ENCODE measurements at regions of chr10 and their contacts with region 1.

Region 1: DNA sequence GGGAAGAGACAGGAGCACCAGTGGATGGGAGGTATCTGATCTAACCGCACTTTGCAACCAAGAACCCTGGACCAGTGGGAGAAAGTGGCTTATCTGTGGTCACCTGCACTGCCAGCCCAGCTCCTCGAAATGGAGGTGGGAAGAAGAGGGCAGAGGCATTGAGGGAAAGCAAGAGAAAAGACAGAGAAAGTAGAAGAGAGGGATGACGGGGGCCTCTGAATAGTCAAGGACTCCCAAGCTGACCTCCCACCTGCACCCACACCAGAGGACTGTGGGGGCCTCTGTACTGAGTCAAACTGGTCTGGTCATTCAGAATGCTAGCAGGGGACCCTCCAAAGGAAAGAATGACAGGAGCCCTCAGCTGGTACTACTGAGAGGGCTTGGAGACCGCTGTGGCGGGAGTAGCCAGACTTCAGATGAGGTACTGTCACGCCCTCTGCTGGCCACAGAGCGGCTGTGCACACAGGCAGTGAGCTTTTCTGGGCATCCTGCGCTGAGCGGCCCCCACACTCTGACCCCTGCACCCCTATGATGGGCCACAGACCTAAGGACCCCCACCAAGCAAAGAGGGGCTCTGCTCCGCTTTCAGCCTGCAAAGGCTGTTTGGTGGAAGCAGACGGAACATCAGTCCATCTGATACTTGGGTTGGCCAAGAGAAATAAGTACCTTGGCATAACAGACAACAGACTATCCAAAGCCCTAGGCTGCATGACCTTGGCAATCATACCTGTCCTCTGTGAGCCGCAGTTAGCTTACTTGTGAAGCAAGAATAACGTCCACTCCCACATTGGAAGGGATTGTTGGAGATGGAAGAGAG is 112.9 kb downstream of the COL13A1 start:
- DNase-seq: no peak
- H3K4me3 ChIP-seq: no peak overlapping the region
- H3K27me3 ChIP-seq: no peaks in the 10 kb centered on the region
- CTCF ChIP-seq: peak; percentile 94

Region 2: DNA sequence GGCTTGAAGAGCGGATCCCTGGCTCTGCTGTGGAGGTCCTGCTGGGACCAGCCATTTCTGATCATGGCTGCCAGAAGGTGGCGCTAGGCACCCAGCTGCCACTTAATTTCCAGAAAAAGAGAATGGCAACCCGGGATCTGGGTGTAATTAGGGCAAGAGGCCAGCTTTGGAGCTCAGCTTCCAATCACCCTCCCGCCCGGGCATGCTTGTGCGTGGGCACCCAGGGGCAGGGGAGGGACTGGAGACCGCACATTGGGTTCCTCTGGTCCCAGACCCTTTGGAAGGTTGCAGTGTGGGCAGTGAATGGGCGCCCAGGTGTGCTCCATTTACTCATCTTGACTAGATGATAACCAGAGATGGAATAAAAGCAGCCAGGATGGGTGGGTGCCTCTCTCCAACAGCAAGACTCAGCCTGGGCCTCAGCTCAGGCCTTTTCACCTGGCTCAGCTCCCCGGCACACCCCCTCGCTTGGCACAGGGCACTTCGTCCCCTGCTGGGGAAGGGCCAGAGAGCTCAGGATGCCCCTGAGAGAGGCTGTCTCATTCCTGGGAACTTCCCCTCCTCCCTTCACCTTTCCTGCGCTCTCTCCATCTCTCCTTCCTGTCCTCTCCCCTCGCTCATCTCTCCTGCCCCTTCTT is 269.8 kb before region 1 on chr10:
- CTCF ChIA-PET with region 1: interaction called, 26 read pairs
- POLR2A ChIA-PET with region 1: no interaction called
- DNase-seq: no peak
- H3K4me3 ChIP-seq: no peak overlapping the region
- H3K27me3 ChIP-seq: peaks cover 6% of the 10 kb centered on the region
- CTCF ChIP-seq: peak; percentile 81

Region 3: DNA sequence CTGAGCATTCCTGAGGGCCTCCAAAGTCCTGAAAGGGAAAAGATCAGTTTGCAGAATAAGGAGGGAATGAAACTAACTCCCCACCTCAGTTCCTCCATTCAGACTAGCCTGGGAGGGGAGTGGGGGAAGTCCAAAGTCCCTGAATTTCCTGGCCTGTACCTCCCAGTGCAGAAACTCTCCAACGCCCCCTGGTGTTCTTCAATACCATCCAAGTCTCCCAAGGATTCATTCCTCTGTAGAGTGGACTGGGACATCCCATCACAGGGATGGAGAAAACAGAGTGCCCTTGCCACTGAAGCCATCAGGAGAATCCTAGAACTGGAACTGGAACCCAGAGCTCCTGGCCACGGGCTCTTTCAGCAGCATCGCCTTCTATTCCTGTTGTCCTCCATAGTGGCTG is 114.5 kb before region 1 on chr10:
- CTCF ChIA-PET with region 1: interaction called, 584 read pairs
- POLR2A ChIA-PET with region 1: no interaction called
- DNase-seq: no peak
- H3K4me3 ChIP-seq: no peak overlapping the region
- H3K27me3 ChIP-seq: no peaks in the 10 kb centered on the region
- CTCF ChIP-seq: peak; percentile 86

Region 4: GRCh38 chr10:69901628-69902505 is 12.7 kb before region 1 on chr10:
- CTCF ChIA-PET with region 1: interaction called, 75 read pairs
- POLR2A ChIA-PET with region 1: no interaction called
- DNase-seq: no peak
- H3K4me3 ChIP-seq: no peak overlapping the region
- H3K27me3 ChIP-seq: no peaks in the 10 kb centered on the region
- CTCF ChIP-seq: peak; percentile 81

Region 5: DNA sequence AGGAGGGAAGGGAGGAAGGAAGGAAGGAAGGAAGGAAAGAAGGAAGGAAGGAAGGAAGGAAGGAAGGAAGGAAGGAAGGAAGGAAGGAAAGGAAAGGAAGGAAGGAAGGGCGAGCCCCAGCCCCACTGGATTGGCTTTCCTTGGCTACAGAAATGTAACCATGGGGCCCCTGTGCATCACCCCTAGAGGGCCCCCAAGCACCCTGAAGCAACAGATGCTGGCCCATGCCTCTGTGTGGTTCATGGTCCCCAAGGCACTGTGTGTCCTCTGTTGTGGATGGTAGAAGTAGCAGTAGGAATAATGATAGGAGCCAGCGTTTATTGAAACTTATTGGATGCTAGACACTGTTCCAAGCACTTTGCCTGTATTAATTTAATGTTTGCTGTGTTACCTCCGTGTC is 21.5 kb after region 1 on chr10:
- CTCF ChIA-PET with region 1: interaction called, 11 read pairs
- POLR2A ChIA-PET with region 1: no interaction called
- DNase-seq: no peak
- H3K4me3 ChIP-seq: no peak overlapping the region
- H3K27me3 ChIP-seq: no peaks in the 10 kb centered on the region
- CTCF ChIP-seq: peak; percentile 40

Region 6: DNA sequence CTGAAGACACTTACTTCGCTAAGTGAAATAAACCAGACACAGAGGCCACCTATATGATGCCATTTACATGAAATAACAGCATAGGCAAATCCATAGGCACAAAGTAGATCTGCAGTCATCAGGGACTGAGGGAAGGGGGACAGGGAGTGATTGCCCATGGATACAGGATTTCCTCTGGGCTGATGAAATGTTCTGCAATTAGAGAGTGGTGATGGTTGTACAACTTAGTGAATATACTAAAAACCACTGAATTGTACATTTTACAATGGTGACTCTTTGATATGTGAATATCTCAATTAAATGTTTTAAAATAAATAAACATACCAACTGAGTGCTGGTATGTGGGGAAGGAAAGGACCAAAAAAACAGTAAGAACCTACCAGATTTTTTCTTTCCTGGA is 298.3 kb after region 1 on chr10:
- CTCF ChIA-PET with region 1: no interaction called
- POLR2A ChIA-PET with region 1: no interaction called
- DNase-seq: no peak
- H3K4me3 ChIP-seq: no peak overlapping the region
- H3K27me3 ChIP-seq: no peaks in the 10 kb centered on the region
- CTCF ChIP-seq: no peak